HepG2 (cell line): ENCODE measurements at regions of chr4 and their contacts with region 1.

Region 1: DNA sequence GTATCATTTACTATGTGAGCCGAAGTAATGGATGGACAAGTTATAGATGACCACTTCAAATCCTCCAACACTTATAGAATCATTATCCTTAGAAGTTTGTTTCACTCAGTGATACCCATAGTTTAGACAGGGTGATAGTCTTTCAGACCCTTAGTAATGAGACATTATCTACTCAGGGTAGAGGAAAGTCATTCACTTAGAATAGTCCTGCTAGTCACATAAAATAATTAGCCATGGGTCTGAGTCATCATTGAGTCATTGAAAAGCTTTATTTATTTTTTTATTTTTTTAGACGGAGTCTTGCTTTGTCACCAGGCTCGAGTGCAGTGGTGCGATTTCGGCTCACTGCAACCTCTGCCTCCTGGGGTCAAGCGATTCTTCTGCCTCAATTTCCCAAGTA is 321.7 kb upstream of the FSTL5 start:
- DNase-seq: no peak
- ATAC-seq: no peak
- H3K4me3 ChIP-seq: no peak overlapping the region
- H3K27ac ChIP-seq: no peak overlapping the region
- H3K4me1 ChIP-seq: no peaks in the 10 kb centered on the region
- H3K27me3 ChIP-seq: no peaks in the 10 kb centered on the region
- CTCF ChIP-seq: no peak
- EP300 ChIP-seq: no peak
- POLR2A ChIP-seq: no peak
- RAD21 ChIP-seq: no peak

Region 2: DNA sequence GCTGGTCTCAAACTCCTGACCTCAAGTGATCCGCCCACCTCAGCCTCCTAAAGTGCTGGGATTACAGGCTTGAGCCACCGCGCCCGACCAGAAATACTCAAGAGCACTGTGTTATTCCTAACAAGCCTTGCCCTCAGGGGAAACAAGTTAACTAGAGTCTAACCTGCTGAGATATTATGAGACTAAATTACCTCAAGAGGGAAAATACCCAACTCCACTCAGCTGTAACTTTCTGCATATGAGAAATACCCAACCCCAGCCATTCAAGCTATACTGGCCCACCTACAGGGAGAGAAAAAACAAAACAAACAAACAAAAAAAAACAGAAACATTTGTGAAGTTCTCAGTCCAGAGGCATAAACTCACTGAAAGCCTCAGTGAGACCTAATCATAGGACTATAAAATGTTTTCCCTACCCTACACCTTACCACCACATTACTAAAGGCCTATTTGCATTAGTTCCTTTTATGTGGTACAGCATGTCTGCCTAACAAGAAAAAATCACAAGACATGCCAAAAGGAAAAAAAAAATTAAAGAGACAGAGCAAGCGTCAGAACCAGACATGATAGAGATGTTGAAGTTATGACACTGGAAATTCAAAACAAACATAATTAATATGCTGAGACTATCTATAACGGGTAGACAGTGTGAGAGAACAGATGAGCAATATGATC is 1197.7 kb before region 1 on chr4:
- CTCF ChIA-PET with region 1: no interaction called
- POLR2A ChIA-PET with region 1: no interaction called
- in situ Hi-C with region 1: no loop called
- intact Hi-C with region 1: loop called (anchors 5 kb)
- DNase-seq: no peak
- ATAC-seq: no peak
- H3K4me3 ChIP-seq: no peak overlapping the region
- H3K27ac ChIP-seq: no peak overlapping the region
- H3K4me1 ChIP-seq: no peaks in the 10 kb centered on the region
- H3K27me3 ChIP-seq: no peaks in the 10 kb centered on the region
- CTCF ChIP-seq: no peak
- EP300 ChIP-seq: no peak
- POLR2A ChIP-seq: no peak
- RAD21 ChIP-seq: no peak

Region 3: DNA sequence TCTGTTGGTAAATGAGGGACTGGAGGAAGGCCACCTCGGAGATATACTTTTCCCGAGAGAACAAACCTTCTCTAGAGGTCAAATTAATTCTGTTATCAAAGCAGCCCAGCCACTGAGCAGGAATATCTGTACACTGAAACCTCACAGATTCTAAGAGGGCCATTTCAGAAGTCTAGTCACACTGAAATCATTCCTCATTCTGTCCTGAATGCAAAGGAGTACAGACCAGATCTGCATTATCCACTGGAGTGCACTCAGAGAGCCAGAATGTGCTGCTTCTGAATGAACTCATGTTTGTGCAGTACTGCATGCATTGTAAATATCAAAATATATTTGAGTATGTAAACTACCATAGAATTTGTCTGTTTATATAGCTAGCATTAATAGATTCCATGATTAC is 43.4 kb before region 1 on chr4:
- CTCF ChIA-PET with region 1: no interaction called
- POLR2A ChIA-PET with region 1: no interaction called
- in situ Hi-C with region 1: no loop called
- intact Hi-C with region 1: no loop called
- DNase-seq: no peak
- ATAC-seq: no peak
- H3K4me3 ChIP-seq: no peak overlapping the region
- H3K27ac ChIP-seq: no peak overlapping the region
- H3K4me1 ChIP-seq: no peaks in the 10 kb centered on the region
- H3K27me3 ChIP-seq: no peaks in the 10 kb centered on the region; a peak in 1 of 5 replicates
- CTCF ChIP-seq: no peak
- EP300 ChIP-seq: no peak
- POLR2A ChIP-seq: no peak
- RAD21 ChIP-seq: no peak

Region 4: GRCh38 chr4:163251204-163251603 is 765.7 kb after region 1 on chr4:
- CTCF ChIA-PET with region 1: no interaction called
- POLR2A ChIA-PET with region 1: no interaction called
- in situ Hi-C with region 1: no loop called
- intact Hi-C with region 1: no loop called
- DNase-seq: peak; percentile 4
- ATAC-seq: peak; percentile 90
- H3K4me3 ChIP-seq: no peak overlapping the region
- H3K27ac ChIP-seq: no peak overlapping the region
- H3K4me1 ChIP-seq: no peaks in the 10 kb centered on the region
- H3K27me3 ChIP-seq: no peaks in the 10 kb centered on the region
- CTCF ChIP-seq: no peak
- EP300 ChIP-seq: no peak
- POLR2A ChIP-seq: no peak
- RAD21 ChIP-seq: no peak